B cell (primary cell): ENCODE measurements at regions of chr15 and their contacts with region 1.

Region 1: DNA sequence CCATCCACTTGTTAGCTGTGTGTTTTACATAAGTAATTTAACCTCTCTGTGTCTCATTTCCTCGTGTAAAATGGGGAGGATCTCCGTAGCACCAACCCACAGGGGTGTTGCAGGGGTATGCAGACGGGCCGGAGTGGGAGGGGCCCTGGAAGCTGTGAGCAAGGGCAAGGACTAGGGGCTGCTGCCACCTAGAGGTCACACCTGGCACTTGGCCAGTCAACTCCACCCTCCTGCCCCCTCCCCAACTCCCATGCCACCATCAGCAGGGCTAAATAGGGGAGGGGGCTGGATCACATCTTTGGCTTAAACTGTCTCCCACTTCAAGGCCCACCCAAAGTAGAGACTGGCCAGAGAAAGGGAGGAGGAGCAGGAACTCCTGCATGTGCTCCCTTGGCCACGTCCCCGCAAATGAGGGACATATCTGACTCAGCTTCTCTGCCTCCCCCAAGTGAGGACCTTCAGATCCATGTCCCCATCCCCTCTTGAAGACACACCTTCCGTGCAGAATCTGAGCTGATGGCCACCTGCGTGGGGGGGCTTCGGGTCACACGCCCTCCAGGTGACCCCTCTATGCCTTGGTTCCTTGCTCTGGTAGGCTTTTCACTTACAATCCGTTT is 2.6 kb downstream of the CCDC9B start:
- DNase-seq: peak; percentile 84
- ATAC-seq: peak; percentile 94
- H3K4me3 ChIP-seq: no peak overlapping the region
- H3K4me3 Mint-ChIP-seq: peak overlapping the region; percentile 37
- H3K27ac ChIP-seq: no peak overlapping the region
- H3K27ac Mint-ChIP-seq: no peak overlapping the region
- H3K4me1 ChIP-seq: peaks cover 21 to 31% of the 10 kb centered on the region in 2 donors
- H3K4me1 Mint-ChIP-seq: peaks cover 24% of the 10 kb centered on the region
- H3K27me3 ChIP-seq: peaks cover 0 to 12% (median 0%) of the 10 kb centered on the region in 4 experiments
- H3K27me3 Mint-ChIP-seq: peaks cover 4% of the 10 kb centered on the region
- CTCF ChIP-seq: peak; percentile 97

Region 2: GRCh38 chr15:39686000-39686613 is 652.0 kb before region 1 on chr15:
- CTCF ChIA-PET with region 1: interaction called, 13 read pairs
- POLR2A ChIA-PET with region 1: no interaction called
- intact Hi-C with region 1: no loop called
- DNase-seq: peak; percentile 56
- ATAC-seq: peak; percentile 33
- H3K4me3 ChIP-seq: no peak overlapping the region
- H3K4me3 Mint-ChIP-seq: no peak overlapping the region
- H3K27ac ChIP-seq: no peak overlapping the region
- H3K27ac Mint-ChIP-seq: no peak overlapping the region
- H3K4me1 ChIP-seq: no peaks in the 10 kb centered on the region
- H3K4me1 Mint-ChIP-seq: no peaks in the 10 kb centered on the region
- H3K27me3 ChIP-seq: no peaks in the 10 kb centered on the region
- H3K27me3 Mint-ChIP-seq: peaks cover 4% of the 10 kb centered on the region
- CTCF ChIP-seq: peak; percentile 92

Region 3: DNA sequence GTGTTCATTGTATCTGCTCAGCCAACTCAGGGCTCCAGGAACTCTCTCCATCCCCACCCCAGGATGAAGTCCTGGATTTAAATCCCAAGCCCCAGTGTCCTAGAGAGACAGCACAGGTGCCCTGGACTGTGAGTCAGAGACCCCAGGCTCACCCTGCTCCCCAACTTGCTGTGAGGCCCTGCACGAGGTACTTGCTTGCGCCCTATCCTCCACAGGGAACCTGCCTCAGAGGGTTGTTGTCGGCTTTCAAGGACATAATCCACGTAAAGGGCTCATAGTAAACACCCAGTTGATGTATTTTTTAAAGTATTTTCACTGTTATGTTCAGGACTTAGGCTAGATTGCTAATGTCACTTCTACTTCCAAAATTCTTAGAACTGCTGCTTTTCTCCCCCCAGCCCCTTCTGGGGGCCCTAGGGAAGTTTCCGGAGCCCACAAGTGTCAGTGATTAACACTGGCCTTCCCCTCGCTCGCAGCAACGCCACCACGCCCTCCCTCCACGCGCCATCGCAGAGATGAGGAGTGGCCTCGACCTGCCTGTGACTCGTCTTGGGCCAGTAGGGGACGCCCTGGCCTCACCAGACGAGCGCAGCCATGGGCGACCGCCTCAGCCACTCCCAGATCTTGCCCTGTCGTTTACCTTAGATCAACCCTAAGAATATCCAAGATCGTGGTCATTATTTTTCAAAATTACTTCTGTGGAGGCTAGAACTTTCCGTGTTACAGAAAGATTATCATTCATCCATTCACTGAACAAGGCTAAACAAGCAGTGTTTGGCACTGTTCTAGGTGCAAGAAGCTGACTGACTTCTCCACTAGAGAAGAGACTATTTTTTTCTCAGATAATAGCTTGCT is 293.2 kb before region 1 on chr15:
- CTCF ChIA-PET with region 1: interaction called, 12 read pairs
- POLR2A ChIA-PET with region 1: no interaction called
- intact Hi-C with region 1: no loop called
- DNase-seq: peak; percentile 90
- ATAC-seq: peak; percentile 94
- H3K4me3 ChIP-seq: peak overlapping the region in 2 of 5 experiments; percentile 26 to 34
- H3K4me3 Mint-ChIP-seq: peak overlapping the region; percentile 52
- H3K27ac ChIP-seq: peak overlapping the region; percentile 65 to 69
- H3K27ac Mint-ChIP-seq: peak overlapping the region; percentile 86
- H3K4me1 ChIP-seq: peaks cover 57 to 64% of the 10 kb centered on the region in 2 donors
- H3K4me1 Mint-ChIP-seq: peaks cover 62% of the 10 kb centered on the region
- H3K27me3 ChIP-seq: no peaks in the 10 kb centered on the region
- H3K27me3 Mint-ChIP-seq: no peaks in the 10 kb centered on the region
- CTCF ChIP-seq: peak; percentile 97

Region 4: DNA sequence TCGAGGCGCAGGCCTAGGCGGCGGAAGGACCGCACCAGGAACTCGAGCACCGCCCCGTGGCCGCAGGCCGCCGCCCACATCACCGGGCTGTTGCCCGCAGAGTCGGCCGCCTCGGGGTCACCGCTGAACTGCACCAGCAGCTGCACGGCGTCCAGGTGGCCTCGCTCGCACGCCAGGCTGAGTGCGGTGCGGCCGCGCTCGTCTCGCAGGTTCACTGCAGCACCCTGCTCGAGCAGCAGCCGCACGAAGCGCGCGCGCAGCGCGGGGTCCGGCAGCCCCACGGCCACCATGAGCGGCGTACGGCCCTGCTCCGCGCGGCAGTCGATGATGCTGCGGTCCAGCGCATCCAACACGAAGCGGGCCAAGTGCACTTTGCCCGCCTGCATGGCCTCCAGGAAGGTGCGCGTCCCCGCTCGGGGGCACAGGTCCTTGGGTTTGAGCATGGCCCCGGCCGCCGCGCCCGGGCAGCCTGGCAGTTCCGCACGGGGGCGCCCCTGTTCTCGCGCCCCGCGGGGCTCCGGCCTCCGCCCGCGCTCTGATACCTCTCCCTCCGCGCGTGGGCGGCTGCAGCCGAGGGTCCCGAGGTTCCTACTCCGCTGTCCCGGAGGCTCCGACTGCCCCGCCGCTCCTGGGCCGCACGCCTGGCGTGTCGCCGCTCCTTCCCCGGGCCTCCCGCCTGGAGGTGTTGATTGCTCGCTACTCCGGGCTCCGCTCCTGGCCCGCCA is 55.8 kb before region 1 on chr15:
- CTCF ChIA-PET with region 1: interaction called, 382 read pairs
- POLR2A ChIA-PET with region 1: interaction called, 4 read pairs
- intact Hi-C with region 1: loop called (anchors 1 kb)
- DNase-seq: peak; percentile 79
- ATAC-seq: peak; percentile 65
- H3K4me3 ChIP-seq: peak overlapping the region; percentile 21 to 76 (median 56)
- H3K4me3 Mint-ChIP-seq: peak overlapping the region; percentile 79
- H3K27ac ChIP-seq: no peak overlapping the region
- H3K27ac Mint-ChIP-seq: no peak overlapping the region
- H3K4me1 ChIP-seq: peaks cover 17 to 29% of the 10 kb centered on the region in 2 donors
- H3K4me1 Mint-ChIP-seq: peaks cover 22% of the 10 kb centered on the region
- H3K27me3 ChIP-seq: peaks cover 0 to 48% (median 23%) of the 10 kb centered on the region in 4 experiments
- H3K27me3 Mint-ChIP-seq: peaks cover 21% of the 10 kb centered on the region
- CTCF ChIP-seq: peak; percentile 71

Region 5: GRCh38 chr15:40307421-40308211 is 30.5 kb before region 1 on chr15 and contains the start of gene PLCB2:
- CTCF ChIA-PET with region 1: interaction called, 204 read pairs
- POLR2A ChIA-PET with region 1: interaction called, 6 read pairs
- intact Hi-C with region 1: loop called (anchors 1 kb)
- DNase-seq: peak; percentile 84
- ATAC-seq: peak; percentile 79
- H3K4me3 ChIP-seq: peak within 1 kb of the TSS; percentile 81 to 98 (median 90)
- H3K4me3 Mint-ChIP-seq: peak within 1 kb of the TSS; percentile 98
- H3K27ac ChIP-seq: peak within 1 kb of the TSS; percentile 77 to 96
- H3K27ac Mint-ChIP-seq: peak within 1 kb of the TSS; percentile 99
- H3K4me1 ChIP-seq: peaks cover 25 to 36% of the 10 kb centered on the region in 2 donors
- H3K4me1 Mint-ChIP-seq: peaks cover 48% of the 10 kb centered on the region
- H3K27me3 ChIP-seq: no peaks in the 10 kb centered on the region
- H3K27me3 Mint-ChIP-seq: no peaks in the 10 kb centered on the region
- CTCF ChIP-seq: peak; percentile 59
- total RNA-seq, gene PLCB2: 155 and 166 TPM in 2 replicates

Region 6: DNA sequence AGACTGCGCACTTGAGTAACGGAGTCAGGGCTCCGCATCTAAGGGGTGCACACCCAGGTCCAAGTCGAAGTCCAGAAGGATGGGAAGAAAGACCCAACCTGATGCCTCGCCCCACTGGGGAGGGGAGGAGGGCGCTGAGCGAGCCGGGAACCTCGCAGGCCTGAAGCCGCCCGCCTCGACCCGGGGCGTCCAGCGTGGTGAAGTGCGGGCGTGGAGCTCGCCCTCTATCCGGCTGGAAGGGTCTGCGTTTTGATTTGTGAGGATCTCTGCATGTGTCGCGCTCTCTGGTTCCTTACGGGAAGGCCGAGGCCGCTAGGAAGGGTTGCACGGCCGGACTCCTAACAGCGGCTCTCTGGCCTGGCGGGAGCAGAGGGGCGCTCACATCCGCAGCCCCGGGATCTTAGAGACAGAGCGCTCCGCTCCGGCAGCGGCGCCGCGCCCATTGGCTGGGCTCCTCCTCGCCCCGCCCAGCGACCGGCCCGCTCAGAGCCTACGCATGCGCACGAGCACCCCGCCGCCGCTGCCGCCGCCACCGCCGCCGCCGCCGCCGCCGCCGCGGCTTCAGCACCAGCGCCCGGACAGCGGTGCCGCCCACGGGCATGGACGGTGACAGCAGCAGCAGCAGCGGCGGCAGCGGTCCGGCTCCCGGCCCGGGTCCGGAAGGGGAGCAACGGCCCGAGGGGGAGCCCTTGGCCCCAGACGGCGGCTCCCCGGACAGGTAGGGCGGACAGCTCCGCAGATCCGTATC is 19.7 kb after region 1 on chr15 and contains the start of gene DISP2:
- CTCF ChIA-PET with region 1: interaction called, 12 read pairs
- POLR2A ChIA-PET with region 1: interaction called, 6 read pairs
- intact Hi-C with region 1: no loop called
- DNase-seq: peak; percentile 95
- ATAC-seq: peak; percentile 93
- H3K4me3 ChIP-seq: peak within 1 kb of the TSS in 4 of 5 experiments; percentile 48 to 78 (median 58)
- H3K4me3 Mint-ChIP-seq: peak within 1 kb of the TSS; percentile 88
- H3K27ac ChIP-seq: no peak within 1 kb of the TSS
- H3K27ac Mint-ChIP-seq: peak within 1 kb of the TSS; percentile 59
- H3K4me1 ChIP-seq: peaks cover 6 to 11% of the 10 kb centered on the region in 2 donors
- H3K4me1 Mint-ChIP-seq: peaks cover 12% of the 10 kb centered on the region
- H3K27me3 ChIP-seq: peaks cover 0 to 6% (median 0%) of the 10 kb centered on the region in 4 experiments
- H3K27me3 Mint-ChIP-seq: peaks cover 8% of the 10 kb centered on the region
- CTCF ChIP-seq: no peak
- total RNA-seq, gene DISP2: 0.15 and 0.71 TPM in 2 replicates

Region 7: GRCh38 chr15:40421246-40422157 is 83.4 kb after region 1 on chr15:
- CTCF ChIA-PET with region 1: interaction called, 308 read pairs
- POLR2A ChIA-PET with region 1: no interaction called
- intact Hi-C with region 1: no loop called
- DNase-seq: peak; percentile 83
- ATAC-seq: peak; percentile 96
- H3K4me3 ChIP-seq: no peak overlapping the region
- H3K4me3 Mint-ChIP-seq: no peak overlapping the region
- H3K27ac ChIP-seq: no peak overlapping the region
- H3K27ac Mint-ChIP-seq: no peak overlapping the region
- H3K4me1 ChIP-seq: peaks cover 4 to 7% of the 10 kb centered on the region in 2 donors
- H3K4me1 Mint-ChIP-seq: peaks cover 2% of the 10 kb centered on the region
- H3K27me3 ChIP-seq: no peaks in the 10 kb centered on the region
- H3K27me3 Mint-ChIP-seq: no peaks in the 10 kb centered on the region
- CTCF ChIP-seq: peak; percentile 97